GM10248 (cell line): ENCODE measurements at regions of chr11 and their contacts with region 1.

Region 1: DNA sequence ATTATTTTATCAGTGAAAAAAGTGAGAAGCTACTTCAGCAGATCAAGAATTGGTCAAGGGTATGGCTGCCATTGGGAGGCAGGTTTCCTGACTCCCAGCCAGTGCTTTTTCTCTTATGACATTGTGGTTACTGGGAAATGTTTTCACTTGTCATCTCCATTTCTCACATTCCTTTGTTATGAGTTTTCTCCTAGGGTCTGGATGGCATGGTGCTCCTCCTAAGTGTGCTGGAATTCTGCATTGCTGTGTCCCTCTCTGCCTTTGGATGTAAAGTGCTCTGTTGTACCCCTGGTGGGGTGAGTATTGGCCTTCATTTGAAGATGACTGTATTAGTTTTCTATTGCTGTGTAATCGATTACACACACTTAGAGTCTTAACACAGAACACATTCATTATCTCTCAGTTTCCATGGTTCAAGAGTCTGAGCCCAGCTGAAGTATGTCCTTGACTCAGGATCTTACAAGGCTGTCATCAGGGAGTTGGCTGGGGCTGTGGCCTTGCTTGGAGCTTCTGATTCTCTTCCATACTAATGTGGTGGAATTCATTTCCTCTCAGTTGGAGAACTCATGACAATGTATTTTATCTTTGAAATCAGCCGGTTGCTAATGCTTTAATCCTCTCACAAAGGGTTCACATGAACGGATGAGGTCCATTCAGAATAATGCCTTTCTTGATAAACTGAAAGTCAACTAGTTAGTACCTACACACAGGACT is 21.0 kb upstream of the MS4A6E start:
- DNase-seq: no peak
- CTCF ChIP-seq: no peak

Region 2: GRCh38 chr11:60155931-60156330 is 150.1 kb before region 1 on chr11:
- CTCF ChIA-PET with region 1: no interaction called
- POLR2A ChIA-PET with region 1: no interaction called
- DNase-seq: no peak
- CTCF ChIP-seq: no peak

Region 3: DNA sequence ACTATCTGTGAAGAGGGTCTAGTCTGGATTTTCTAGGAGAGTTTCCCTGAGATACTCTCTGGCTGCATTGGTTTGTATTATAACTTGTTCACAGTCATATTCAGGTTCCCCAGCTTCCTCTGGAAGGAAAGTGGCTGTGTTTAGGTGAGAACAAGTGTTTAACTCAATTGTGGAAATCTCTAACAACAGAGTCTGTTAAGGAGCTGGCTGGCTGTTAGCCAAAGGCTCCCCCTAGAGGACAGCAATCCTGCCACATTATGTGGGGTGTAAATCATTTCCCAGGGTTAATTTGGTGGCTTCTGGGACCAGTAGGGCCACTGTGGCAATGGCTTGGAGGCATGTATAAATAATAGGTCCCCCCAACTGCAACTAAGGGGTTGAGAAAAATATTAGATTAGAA is 39.4 kb after region 1 on chr11:
- CTCF ChIA-PET with region 1: interaction called, 16 read pairs
- POLR2A ChIA-PET with region 1: no interaction called
- DNase-seq: no peak
- CTCF ChIP-seq: peak; percentile 62

Region 4: DNA sequence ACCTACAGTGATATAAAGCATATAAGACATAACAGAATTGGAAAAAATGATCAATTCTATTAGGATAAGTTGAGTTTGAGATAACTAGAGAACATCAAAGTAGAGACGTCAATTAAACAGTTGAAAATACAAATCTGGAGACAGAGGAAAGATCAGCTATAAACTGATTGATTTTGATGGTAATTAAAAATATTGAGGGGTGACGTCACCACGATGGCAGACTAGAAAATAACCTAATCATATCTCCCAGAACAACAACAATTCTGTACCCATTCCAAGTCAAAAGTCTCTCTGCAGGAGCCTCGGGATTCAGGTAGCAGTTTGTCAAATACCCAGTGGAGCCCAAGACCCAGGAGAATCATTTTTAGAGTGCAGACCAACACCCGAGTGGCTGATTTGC is 238.0 kb after region 1 on chr11:
- CTCF ChIA-PET with region 1: no interaction called
- POLR2A ChIA-PET with region 1: no interaction called
- DNase-seq: no peak
- CTCF ChIP-seq: no peak